ENCODE measurements at regions of chr2 and their contacts with region 1.

Region 1: DNA sequence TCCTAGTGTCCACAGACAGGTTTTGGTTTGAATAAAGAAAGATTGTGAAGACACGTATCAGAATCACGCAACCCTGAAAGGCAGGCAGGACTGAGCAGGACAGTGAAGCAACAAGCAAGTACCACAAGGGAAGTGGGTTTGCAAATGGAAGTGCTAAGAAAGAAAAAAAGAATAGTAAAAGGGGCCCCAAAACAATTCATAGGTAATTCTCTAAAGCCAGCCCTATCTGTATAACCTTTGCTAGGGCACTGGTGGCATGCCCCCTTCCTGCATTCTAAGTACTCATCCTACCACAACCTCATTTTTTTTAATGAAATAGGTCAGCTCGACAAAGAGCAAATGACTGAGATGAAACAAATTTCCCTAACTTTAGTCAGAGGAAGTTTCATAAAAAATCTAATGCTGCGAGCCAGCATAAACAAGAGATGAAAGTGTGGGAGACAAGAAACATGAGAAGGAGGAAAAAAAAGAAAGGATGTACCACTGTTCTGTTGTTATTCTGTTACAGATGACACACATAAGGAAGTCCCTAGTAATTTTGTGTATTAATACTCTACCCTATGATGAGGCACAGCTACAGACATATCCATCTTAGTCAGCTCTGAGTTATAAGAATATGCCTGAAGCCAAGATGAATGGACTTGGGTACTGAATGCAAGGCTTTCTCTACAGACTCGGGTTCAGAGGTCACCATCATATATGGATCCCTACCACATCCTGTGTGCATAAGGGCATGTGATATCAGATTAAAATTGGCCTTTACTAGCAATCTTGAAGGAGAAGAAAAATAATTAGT is 32.2 kb downstream of the IKZF2 start:
- DNase-seq: no peak
- H3K4me3 Mint-ChIP-seq: peak overlapping the region; percentile 63
- H3K27ac Mint-ChIP-seq: peak overlapping the region; percentile 95
- H3K4me1 Mint-ChIP-seq: peaks cover 50% of the 10 kb centered on the region
- H3K27me3 Mint-ChIP-seq: peaks cover 4% of the 10 kb centered on the region

Region 2: DNA sequence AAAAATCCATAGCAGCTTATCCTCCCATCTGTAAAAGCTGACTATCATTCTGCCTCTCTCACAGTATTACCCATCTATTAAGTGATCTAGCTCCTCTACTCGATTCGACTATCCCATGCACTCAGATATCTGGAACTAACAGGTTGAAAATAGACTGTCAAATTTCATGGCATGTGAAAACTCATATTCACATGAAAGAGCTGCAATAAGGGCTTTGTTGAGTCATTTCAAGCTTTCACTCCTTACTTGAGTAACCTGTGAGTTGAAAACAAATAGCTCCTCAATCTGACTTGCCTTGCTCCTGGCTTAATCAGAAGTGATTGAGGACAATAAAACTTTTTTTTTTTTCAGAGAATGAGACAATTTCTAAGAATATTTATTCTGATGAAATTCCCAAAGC is 388.3 kb before region 1 on chr2:
- intact Hi-C with region 1: loop called (anchors 5 kb)
- DNase-seq: no peak
- H3K4me3 Mint-ChIP-seq: no peak overlapping the region
- H3K27ac Mint-ChIP-seq: no peak overlapping the region
- H3K4me1 Mint-ChIP-seq: peaks cover 5% of the 10 kb centered on the region
- H3K27me3 Mint-ChIP-seq: peaks cover 1% of the 10 kb centered on the region

Region 3: DNA sequence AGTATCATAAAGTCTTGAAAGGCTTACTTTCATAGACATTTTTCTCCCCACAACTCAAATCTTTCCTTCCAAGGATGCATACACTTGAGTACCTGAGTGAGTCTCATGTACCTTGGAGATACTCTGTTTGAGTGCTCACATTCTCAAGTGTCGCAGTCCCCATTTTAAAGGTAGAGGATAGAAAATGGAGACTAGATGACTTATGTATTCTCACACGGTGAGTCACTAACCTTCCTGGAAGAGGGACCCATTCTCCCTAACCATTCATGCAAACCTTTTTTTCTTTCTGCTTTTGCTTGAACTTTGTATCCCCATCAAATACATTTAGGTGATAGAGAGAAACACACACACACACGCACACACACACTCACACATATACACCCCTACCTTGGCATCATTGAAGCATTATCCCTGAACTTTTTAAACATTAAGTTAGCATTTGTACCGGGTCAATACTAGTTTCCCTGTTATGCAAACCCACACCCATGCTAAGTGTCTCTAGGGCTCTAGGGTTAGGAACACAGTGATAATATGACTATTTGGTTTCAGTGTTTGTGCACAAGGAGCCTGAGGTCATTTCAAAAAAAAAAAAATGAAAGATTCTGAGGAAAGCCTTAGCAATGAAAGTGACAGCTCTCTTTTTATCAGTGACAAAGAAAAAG is 204.0 kb before region 1 on chr2:
- intact Hi-C with region 1: loop called (anchors 1 kb)
- DNase-seq: no peak
- H3K4me3 Mint-ChIP-seq: peak overlapping the region; percentile 11
- H3K27ac Mint-ChIP-seq: peak overlapping the region; percentile 54
- H3K4me1 Mint-ChIP-seq: peaks cover 30% of the 10 kb centered on the region
- H3K27me3 Mint-ChIP-seq: peaks cover 6% of the 10 kb centered on the region

Region 4: GRCh38 chr2:212958757-212959295 is 160.4 kb before region 1 on chr2:
- intact Hi-C with region 1: loop called (anchors 1 kb)
- DNase-seq: no peak
- H3K4me3 Mint-ChIP-seq: peak overlapping the region; percentile 19
- H3K27ac Mint-ChIP-seq: peak overlapping the region; percentile 75
- H3K4me1 Mint-ChIP-seq: peaks cover 46% of the 10 kb centered on the region
- H3K27me3 Mint-ChIP-seq: no peaks in the 10 kb centered on the region

Region 5: GRCh38 chr2:213021971-213022899 is 97.0 kb before region 1 on chr2:
- intact Hi-C with region 1: loop called (anchors 1 kb)
- DNase-seq: no peak
- H3K4me3 Mint-ChIP-seq: no peak overlapping the region
- H3K27ac Mint-ChIP-seq: peak overlapping the region; percentile 87
- H3K4me1 Mint-ChIP-seq: peaks cover 28% of the 10 kb centered on the region
- H3K27me3 Mint-ChIP-seq: peaks cover 20% of the 10 kb centered on the region

Region 6: DNA sequence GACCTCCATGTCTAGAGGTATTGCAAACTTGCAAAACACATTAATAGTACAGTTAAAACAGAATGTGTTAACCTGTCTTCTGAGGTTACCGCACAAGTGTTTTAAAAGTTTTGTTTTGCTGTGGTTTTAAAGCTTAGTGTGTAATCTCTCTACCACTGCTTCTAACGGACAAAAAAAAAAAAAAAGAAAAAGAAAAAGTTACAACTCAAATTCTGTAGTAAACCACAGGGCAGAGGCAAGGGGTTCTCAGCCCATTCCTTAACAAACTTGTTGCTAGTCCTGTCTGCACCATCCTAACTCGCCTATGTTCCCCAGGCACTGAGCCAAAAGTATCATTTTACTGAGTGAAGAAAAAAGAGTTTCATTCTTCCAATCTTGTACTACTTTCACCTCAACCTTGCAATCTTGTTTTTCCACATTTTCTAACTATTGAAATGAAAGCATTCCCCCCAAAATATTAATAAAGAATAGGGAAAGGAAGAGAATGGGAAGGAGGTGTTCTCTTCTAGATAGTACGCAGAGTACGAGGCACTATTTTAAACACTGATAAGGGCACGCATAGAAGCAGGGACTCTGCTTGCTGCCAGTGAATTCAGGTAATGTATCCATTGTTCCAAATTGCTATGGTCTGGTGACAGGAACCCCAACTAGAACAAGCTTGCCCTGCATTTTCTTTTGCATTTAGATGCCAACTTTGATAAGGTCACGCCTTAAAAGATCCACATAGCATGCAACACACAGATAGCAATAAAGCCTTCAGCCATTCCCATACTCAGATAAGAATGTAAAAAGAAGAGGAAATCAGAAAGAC is 15.0 kb before region 1 on chr2:
- intact Hi-C with region 1: loop called (anchors 1 kb)
- DNase-seq: no peak
- H3K4me3 Mint-ChIP-seq: peak overlapping the region; percentile 47
- H3K27ac Mint-ChIP-seq: peak overlapping the region; percentile 16
- H3K4me1 Mint-ChIP-seq: peaks cover 31% of the 10 kb centered on the region
- H3K27me3 Mint-ChIP-seq: peaks cover 7% of the 10 kb centered on the region

Region 7: DNA sequence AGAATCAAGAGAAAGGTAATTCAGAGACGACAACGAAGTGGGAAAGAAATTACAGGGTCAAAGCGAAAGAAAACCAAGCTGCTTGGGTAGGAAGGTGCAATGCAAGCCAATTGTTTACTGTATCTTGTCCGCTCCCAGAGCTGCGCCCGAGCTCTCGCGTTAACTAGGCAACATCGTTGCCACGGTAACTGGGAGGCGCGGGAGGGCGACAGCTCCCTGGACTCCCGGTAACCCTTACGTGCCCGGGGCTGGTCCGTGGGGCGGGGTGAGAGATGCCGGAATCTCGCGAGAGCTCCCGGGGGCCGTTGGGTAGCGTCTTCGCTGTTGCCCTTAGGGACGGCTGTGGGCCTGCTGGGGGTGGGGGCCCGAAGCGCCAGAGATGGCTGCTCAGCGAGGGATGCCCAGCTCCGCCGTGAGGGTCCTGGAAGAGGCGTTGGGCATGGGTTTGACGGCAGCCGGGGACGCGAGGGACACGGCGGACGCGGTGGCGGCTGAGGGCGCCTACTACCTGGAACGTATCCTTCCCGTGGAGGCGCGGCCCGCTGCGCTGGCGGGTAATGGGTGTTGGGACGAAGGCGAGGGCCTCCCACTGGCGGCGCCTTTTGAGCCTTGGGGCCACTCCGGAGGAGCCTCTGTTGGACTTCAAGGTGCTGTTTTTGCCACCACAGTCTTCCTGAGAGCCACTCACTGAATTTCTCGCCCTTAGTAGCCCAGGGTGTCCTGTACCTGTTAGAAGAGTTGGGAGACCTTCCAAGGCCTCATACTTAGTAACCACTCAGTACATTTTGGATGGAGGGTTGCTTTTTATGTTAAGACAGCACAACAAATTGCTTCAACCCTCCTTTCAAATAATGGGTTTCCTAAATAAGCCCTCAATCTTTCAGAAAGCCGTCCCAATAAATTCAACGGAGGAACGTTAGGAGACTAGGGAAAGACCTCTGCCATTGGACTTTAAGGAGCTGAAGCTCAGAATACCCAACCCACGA is 165.1 kb after region 1 on chr2 and contains the start of gene SPAG16:
- intact Hi-C with region 1: no loop called
- DNase-seq: peak; percentile 97
- H3K4me3 Mint-ChIP-seq: peak within 1 kb of the TSS; percentile 90
- H3K27ac Mint-ChIP-seq: peak within 1 kb of the TSS; percentile 84
- H3K4me1 Mint-ChIP-seq: peaks cover 26% of the 10 kb centered on the region
- H3K27me3 Mint-ChIP-seq: peaks cover 4% of the 10 kb centered on the region
- total RNA-seq, gene SPAG16: 7.5 and 8.0 TPM in 2 replicates

Measured in activated T-helper 2 cell treated with anti-CD3 and anti-CD28 coated beads, Interferon-gamma antibody, Interleukin-2, Interleukin-4, amounts not matched to agents 10 μg/mL and 5 μg/mL and 100 μg/mL, durations not matched to agents 14 hours and 24 hours and 36 hours (primary cell).